ENCODE measurements at regions of chr9 and their contacts with region 1.

Region 1: DNA sequence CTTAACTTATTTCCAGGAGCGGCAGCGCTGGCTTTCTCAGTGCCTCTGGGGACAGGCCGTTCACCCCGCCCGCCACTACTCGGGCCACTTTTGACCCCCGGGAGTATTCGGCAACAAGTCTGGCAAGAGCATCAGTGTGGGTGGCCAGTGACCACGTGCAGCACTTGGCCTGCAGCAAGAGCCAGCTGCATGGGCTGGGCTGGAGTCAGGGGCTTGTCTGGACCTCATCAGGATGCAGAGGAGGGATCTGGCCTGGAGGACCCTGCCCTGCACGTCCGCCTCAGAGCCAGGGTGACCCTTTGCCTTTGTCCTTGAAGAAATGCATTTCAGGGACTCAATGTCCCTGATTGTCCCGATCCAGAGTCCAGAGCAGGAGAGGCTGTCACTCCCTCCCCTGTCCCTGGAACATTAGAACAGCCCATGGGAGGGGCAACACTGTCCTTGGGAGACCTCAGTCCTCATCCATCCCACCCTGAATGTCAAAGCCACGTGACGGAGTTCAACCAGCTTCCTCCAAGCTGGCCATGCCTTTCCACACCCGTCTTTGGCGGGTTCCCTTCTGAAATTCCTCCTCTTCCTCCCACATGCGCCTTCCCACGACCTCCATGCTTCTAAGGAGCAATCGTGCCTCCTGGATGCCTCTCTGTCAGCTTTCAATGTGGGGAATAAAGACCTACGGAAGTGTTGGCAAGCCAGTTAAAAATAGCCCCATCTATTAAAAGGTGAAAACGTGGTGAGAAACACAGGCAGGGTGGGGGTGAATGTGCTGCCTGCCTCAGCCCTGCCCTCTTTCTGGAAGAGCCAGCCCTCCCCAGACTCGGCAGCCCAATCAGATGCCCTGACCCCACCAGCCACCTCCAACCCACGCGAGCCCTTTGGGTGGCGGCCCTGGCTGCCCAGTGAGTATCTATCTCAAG is 99.0 kb downstream of the OLFM1 start:
- DNase-seq: no peak
- H3K4me3 ChIP-seq: no peak overlapping the region
- H3K27ac ChIP-seq: no peak overlapping the region
- H3K4me1 ChIP-seq: no peaks in the 10 kb centered on the region
- H3K27me3 ChIP-seq: peaks cover 90% of the 10 kb centered on the region
- CTCF ChIP-seq: no peak

Region 2: DNA sequence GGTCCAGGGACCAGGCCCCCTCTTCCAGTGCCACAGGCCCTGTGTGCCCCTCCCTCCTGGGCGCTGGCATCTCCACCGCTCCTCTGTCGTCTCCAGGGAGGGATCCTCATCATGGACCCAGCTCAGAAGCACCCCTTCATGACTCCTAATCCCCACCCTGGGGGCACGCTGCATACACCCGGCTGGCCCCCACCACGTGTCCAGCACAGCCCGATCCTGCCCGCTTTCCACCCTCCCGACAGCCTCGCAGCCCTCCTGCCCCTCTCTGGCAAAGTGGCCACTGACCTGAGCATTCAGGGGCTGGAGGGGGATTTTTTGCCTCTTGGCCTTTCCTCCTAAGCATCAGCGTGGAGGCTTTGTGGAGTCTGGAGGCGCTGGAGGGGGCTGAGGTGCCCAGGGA is 1116.0 kb after region 1 on chr9:
- CTCF ChIA-PET with region 1: no interaction called
- POLR2A ChIA-PET with region 1: interaction called, 11 read pairs
- intact Hi-C with region 1: no loop called
- DNase-seq: no peak
- H3K4me3 ChIP-seq: no peak overlapping the region
- H3K27ac ChIP-seq: no peak overlapping the region
- H3K4me1 ChIP-seq: no peaks in the 10 kb centered on the region; the same call in 1 of the 2 replicates
- H3K27me3 ChIP-seq: no peaks in the 10 kb centered on the region
- CTCF ChIP-seq: no peak

Measured in PC-9 (cell line).